Activated CD4-positive, alpha-beta T cell treated with anti-CD3 and anti-CD28 coated beads, Interleukin-2, amount 10 ng/mL, durations not matched to agents 7 days and 5 days (primary cell): ENCODE measurements at regions of chr17 and their contacts with region 1.

Region 1: DNA sequence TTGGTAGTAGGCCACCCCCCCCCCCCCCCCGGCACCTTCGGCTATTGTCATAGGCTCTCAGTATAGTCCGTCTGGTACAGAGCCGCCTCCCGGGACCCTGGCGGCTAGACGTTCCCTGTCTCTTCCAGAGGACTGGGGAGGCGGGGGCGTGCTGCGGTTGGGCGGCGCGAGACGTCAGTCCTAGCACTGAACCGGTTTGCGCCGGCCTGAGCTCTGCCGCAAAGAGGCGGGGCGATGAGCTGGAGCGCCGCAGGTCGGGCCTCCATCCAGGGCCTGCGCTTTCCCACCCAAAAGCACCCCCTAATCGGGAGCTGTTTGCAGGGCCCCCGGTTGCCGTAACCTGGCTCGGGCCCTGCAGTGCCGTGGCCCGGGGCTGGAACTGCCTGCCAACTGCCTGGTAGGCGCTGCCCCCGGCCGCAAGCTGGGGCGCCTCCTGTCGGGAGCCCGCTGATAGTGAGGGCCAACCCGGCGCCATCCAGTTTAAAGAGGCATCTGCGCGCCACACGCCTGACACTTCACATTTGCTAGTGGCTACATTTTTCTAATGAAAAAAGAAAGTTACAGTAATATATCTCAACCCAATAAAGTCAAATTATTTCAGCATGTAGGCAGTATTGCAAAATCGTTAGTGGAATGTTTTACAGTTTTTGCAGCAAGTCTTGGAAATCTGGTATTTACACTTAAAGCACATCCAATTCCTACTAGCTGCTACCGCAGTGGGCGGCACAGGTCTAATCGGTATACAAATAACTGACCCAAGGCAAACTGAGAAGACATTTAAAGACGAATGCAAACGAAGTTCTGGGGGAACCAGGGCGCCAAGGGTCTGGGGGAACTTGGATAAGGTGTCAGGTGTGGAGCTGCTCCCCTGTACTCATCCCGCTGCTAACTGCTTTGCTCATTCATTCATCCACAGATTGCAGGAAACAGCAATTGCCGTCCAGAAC is 748 bp upstream of the USP22 start:
- DNase-seq: peak; percentile 96
- H3K4me3 Mint-ChIP-seq: peak overlapping the region; percentile 99
- H3K27ac Mint-ChIP-seq: peak overlapping the region; percentile 93
- H3K4me1 Mint-ChIP-seq: peaks cover 28% of the 10 kb centered on the region
- H3K27me3 Mint-ChIP-seq: peaks cover 2% of the 10 kb centered on the region

Region 2: DNA sequence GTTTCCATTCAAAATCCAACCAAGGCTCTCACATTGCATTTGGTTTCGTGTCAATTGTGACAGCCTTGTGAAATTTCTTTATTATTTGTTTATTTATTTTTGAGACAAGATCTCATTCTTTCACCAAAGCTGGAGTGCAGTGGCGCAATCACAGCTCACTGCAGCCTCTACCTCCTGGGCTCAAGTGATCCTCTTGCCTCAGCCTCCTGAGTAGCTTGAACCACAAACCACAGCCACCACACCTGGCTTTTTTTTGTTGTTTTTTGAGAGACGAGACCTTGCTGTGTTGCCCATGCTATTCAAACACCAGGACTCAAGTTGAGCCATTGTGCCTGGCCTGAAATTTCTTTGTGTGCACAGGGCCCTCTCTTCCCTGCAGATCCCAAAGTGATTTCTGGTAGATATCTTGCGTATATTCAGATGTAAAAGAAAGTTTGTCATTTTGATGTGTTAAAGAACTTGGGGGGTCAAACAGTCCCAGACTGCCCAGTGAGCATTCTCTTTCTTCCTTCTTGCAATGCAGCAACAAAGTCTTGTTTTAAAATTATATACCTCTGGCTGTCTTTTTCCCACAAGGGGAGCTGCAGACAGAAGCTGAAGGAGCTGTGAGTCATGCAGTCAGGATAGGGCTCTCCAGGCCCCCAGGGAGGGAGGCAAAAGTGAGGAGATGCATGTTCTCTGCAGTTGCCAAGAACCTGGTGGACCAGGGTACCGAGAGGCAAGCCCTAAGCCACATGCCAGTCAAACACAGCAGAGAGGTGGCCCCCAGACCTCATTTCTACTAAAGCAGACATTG is 14.7 kb after region 1 on chr17:
- CTCF ChIA-PET with region 1: interaction called, 29 read pairs
- POLR2A ChIA-PET with region 1: no interaction called
- DNase-seq: peak; percentile 14
- H3K4me3 Mint-ChIP-seq: no peak overlapping the region
- H3K27ac Mint-ChIP-seq: no peak overlapping the region
- H3K4me1 Mint-ChIP-seq: peaks cover 6% of the 10 kb centered on the region
- H3K27me3 Mint-ChIP-seq: peaks cover 3% of the 10 kb centered on the region

Region 3: DNA sequence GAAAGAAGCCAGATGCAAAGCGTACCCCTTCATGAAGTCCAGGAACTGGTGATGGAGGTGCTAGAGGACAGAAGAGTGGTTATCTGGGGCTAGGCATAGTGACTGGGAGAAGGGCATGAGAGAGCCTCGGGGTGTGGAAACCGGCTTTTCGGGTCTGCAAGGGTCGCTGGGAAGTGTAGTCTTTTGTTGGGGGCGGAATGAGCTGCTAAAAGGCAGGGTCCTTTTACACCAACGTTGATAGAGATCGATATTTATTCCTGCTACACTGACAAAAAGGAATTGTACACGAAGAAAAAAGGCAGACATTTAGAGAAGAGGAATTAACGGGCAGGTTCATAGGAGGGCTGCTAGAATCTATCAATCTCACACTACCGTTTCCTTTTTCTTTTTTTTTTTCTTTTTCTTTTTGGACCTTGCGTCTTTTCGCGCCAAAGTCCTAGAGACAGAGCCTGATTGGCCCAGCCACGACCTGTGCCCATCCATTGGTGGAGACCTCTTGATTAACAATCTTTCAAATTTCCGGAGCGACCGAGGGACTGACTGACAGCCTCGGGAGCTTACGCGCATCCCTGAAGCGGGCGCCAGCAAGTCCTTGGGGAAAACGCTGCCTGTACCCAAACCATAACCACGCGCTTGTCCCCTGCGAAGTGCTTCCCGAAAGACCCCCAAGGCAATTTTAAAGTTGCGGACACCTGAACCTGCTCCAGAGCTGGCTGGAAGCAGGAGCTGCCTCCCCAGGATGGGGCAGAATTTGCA is 55.6 kb after region 1 on chr17:
- CTCF ChIA-PET with region 1: interaction called, 17 read pairs
- POLR2A ChIA-PET with region 1: interaction called, 13 read pairs
- DNase-seq: peak; percentile 88
- H3K4me3 Mint-ChIP-seq: peak overlapping the region; percentile 86
- H3K27ac Mint-ChIP-seq: peak overlapping the region; percentile 98
- H3K4me1 Mint-ChIP-seq: peaks cover 25% of the 10 kb centered on the region
- H3K27me3 Mint-ChIP-seq: no peaks in the 10 kb centered on the region